CD14-positive monocyte (primary cell): ENCODE measurements at regions of chr19 and their contacts with region 1.

Region 1: GRCh38 chr19:47391510-47392223 is 27.7 kb downstream of the MEIS3 start:
- DNase-seq: peak; percentile 79 to 90 (median 85)
- H3K4me3 ChIP-seq: no peak overlapping the region
- H3K4me3 Mint-ChIP-seq: peak overlapping the region; percentile 2 to 31
- H3K27ac ChIP-seq: peak overlapping the region in 1 of 2 donors; percentile 100
- H3K27ac Mint-ChIP-seq: peak overlapping the region; percentile 100
- H3K4me1 ChIP-seq: peaks cover 43 to 46% of the 10 kb centered on the region in 2 donors
- H3K4me1 Mint-ChIP-seq: peaks cover 44% of the 10 kb centered on the region
- H3K27me3 ChIP-seq: peaks cover 0 to 3% of the 10 kb centered on the region in 2 donors
- H3K27me3 Mint-ChIP-seq: peaks cover 16 to 24% (median 19%) of the 10 kb centered on the region in 3 donors
- CTCF ChIP-seq: peak; percentile 91

Region 2: GRCh38 chr19:47284324-47284899 is 107.3 kb before region 1 on chr19:
- intact Hi-C with region 1: loop called in 1 of 2 experiments (anchors 1 kb)
- DNase-seq: peak; percentile 47 to 59 (median 52)
- H3K4me3 ChIP-seq: no peak overlapping the region
- H3K4me3 Mint-ChIP-seq: no peak overlapping the region
- H3K27ac ChIP-seq: no peak overlapping the region
- H3K27ac Mint-ChIP-seq: peak overlapping the region in 1 of 7 donors; percentile 70
- H3K4me1 ChIP-seq: no peaks in the 10 kb centered on the region
- H3K4me1 Mint-ChIP-seq: peaks cover 7% of the 10 kb centered on the region
- H3K27me3 ChIP-seq: no peaks in the 10 kb centered on the region
- H3K27me3 Mint-ChIP-seq: peaks cover 0 to 3% (median 2%) of the 10 kb centered on the region in 3 donors
- CTCF ChIP-seq: peak; percentile 68

Region 3: DNA sequence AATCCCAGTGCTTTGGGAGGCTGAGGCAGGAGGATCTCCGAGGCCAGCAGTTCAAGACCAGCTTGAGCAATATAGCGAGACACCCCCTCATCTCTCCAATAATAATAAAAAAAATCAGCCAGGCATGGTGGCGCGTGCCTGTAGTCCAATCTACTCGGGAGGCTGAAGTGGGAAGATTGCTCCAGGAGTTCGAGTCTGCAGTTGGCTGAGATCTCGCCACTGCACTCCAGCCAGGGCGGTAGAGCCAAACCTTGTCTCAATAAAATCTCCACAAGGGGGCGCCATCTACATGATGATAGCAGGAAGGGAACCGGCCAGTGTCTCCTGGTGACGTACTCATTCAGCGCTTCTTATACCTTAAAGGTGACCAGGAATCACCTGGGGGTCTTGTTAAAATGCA is 95.6 kb before region 1 on chr19:
- intact Hi-C with region 1: loop called (anchors 1 kb)
- DNase-seq: peak; percentile 77 to 88 (median 84)
- H3K4me3 ChIP-seq: no peak overlapping the region
- H3K4me3 Mint-ChIP-seq: peak overlapping the region in 1 of 2 donors; percentile 37
- H3K27ac ChIP-seq: no peak overlapping the region
- H3K27ac Mint-ChIP-seq: peak overlapping the region in 2 of 7 donors; percentile 57 to 84
- H3K4me1 ChIP-seq: peaks cover 12 to 15% of the 10 kb centered on the region in 2 donors
- H3K4me1 Mint-ChIP-seq: peaks cover 19% of the 10 kb centered on the region
- H3K27me3 ChIP-seq: no peaks in the 10 kb centered on the region
- H3K27me3 Mint-ChIP-seq: peaks cover 6 to 19% (median 8%) of the 10 kb centered on the region in 3 donors
- CTCF ChIP-seq: peak; percentile 81

Region 4: DNA sequence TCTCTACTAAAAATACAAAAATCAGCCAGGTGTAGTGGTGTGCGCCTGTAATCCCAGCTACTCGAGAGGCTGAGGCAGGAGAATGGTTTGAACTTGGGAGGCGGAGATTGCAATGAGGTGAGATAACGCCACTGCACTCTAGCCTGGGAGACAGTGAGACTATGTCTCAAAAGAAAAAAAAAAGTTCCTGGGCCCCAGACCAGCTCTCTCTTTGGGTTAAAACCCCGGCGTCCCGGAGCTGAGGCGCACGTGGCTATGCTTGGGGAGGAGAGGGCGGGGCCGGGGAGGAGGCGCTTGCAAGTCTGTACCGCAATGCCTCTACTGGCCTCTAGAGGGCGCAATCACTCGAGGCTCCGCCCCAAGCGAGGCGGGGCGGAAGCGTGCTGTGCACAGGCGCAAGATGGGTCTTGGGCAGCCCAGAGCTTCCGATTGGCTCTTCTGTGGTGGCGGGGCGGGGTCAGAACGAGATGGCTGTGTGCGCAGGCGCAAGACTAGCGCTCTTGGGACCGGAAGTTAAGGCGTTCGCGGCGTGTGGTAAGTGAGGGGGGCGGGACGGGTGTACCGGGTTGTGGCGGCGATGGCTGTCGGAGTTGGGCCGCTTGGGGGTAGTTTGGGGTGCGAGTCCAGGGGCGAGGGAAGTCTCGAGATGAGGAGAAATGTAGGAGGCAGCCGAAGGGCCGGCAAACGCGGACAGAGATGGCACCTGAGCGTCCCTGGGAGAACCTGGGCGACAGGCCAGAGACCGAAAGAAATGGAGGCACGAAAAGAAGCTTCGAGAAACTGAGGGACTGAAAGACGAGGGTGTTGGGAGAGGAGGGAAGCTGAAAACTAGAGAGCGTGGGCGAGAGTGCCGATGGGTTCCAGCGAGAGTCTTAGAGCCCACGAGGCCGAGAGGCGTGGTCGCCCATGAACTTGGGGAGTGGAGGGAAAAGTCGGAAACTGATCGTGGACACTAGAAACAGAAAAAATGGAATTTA is 42.6 kb before region 1 on chr19 and contains the start of gene DHX34:
- intact Hi-C with region 1: loop called (anchors 2 to 5 kb)
- DNase-seq: peak; percentile 99
- H3K4me3 ChIP-seq: peak within 1 kb of the TSS; percentile 61 to 97 (median 85)
- H3K4me3 Mint-ChIP-seq: peak within 1 kb of the TSS; percentile 97
- H3K27ac ChIP-seq: peak within 1 kb of the TSS; percentile 83 to 98
- H3K27ac Mint-ChIP-seq: peak within 1 kb of the TSS; percentile 96 to 100 (median 99)
- H3K4me1 ChIP-seq: peaks cover 40 to 54% of the 10 kb centered on the region in 2 donors
- H3K4me1 Mint-ChIP-seq: peaks cover 47% of the 10 kb centered on the region
- H3K27me3 ChIP-seq: no peaks in the 10 kb centered on the region
- H3K27me3 Mint-ChIP-seq: peaks cover 0 to 3% (median 0%) of the 10 kb centered on the region in 3 donors
- CTCF ChIP-seq: peak; percentile 91
- polyA plus RNA-seq, gene DHX34: 3.4 to 34.4 (median 3.8) TPM

Region 5: DNA sequence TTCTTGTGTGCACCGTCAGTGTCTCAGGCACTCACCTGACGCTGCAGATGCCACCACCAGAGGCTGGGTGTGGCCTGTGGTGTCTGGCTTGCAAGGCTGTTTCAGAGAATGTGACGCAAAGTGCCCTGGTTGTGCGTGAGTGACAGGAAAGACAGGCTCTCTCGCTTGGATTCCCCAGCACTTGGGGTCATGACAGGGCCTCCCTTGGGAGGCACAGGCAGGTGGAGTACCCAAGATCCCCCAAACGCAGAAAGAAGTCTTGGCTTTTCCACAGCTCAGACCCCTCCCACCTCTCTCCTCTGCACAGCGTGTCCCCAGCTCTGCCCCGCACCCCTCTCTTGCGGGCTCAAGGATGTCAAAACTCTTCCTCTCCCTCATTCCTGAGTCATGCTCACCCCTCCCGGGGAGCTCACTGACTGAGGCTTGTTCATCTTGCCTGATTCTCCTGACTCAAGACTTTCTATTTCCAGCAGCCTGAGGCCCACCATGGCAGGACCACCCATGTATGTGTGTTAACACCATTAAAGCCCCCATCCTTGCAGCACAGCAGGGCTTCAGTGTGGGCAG is 21.5 kb before region 1 on chr19:
- intact Hi-C with region 1: loop called in 1 of 2 experiments (anchors 2 kb)
- DNase-seq: peak; percentile 90 to 96 (median 90)
- H3K4me3 ChIP-seq: peak overlapping the region in 1 of 3 experiments; percentile 41
- H3K4me3 Mint-ChIP-seq: peak overlapping the region; percentile 70 to 87
- H3K27ac ChIP-seq: peak overlapping the region; percentile 86 to 94
- H3K27ac Mint-ChIP-seq: peak overlapping the region; percentile 98 to 100 (median 100)
- H3K4me1 ChIP-seq: peaks cover 30 to 35% of the 10 kb centered on the region in 2 donors
- H3K4me1 Mint-ChIP-seq: peaks cover 38% of the 10 kb centered on the region
- H3K27me3 ChIP-seq: no peaks in the 10 kb centered on the region
- H3K27me3 Mint-ChIP-seq: no peaks in the 10 kb centered on the region
- CTCF ChIP-seq: no peak

Region 6: GRCh38 chr19:47428177-47428894 is 36.7 kb after region 1 on chr19:
- intact Hi-C with region 1: loop called in 1 of 2 experiments (anchors 5 kb)
- DNase-seq: peak; percentile 74 to 95 (median 78)
- H3K4me3 ChIP-seq: peak overlapping the region in 1 of 3 experiments; percentile 9
- H3K4me3 Mint-ChIP-seq: no peak overlapping the region
- H3K27ac ChIP-seq: no peak overlapping the region
- H3K27ac Mint-ChIP-seq: no peak overlapping the region
- H3K4me1 ChIP-seq: peaks cover 13 to 21% of the 10 kb centered on the region in 2 donors
- H3K4me1 Mint-ChIP-seq: peaks cover 7% of the 10 kb centered on the region
- H3K27me3 ChIP-seq: peaks cover 26 to 86% of the 10 kb centered on the region in 2 donors
- H3K27me3 Mint-ChIP-seq: peaks cover 29 to 60% (median 58%) of the 10 kb centered on the region in 3 donors
- CTCF ChIP-seq: no peak

Region 7: DNA sequence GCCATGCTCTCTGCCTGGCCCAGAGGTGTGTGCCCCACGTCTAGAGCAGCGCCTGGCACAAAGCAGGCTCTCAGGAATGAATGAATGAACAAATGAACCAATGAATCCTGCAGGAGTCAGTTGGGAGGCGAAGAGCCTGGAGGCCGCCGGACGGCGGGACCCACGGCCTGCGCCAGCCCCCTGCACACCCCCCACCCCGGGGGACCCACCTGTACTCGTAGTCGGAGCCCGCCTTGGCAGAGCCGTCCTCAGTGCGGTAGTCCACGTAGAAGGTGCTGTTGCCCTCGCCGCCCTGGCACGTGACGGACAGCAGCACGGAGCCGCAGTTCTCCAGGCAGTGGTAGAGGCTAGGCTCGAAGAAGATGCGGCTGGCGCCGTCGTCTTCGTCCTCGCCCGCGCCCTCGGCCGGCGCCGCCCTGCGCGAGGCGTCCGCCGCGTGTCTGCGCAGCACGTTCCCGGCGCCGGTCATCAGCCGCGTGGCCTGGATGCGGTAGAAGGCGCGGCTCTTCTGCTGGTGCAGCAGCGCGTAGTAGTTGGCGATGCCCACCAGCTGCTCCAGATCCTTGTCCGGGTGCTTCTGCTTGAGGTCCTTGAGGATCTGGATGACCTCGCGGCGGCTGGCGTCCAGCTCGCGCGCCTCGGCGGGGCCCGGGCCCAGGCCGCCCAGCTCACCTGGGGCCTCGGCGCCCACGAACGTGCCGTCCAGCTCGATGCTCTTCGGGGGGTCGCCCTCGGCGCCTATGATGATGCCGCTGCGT is 65.2 kb after region 1 on chr19:
- intact Hi-C with region 1: no loop called
- DNase-seq: no peak
- H3K4me3 ChIP-seq: no peak overlapping the region
- H3K4me3 Mint-ChIP-seq: peak overlapping the region in 1 of 2 donors; percentile 68
- H3K27ac ChIP-seq: no peak overlapping the region
- H3K27ac Mint-ChIP-seq: no peak overlapping the region
- H3K4me1 ChIP-seq: no peaks in the 10 kb centered on the region
- H3K4me1 Mint-ChIP-seq: peaks cover 2% of the 10 kb centered on the region
- H3K27me3 ChIP-seq: peaks cover 28 to 51% of the 10 kb centered on the region in 2 donors
- H3K27me3 Mint-ChIP-seq: peaks cover 18 to 48% (median 44%) of the 10 kb centered on the region in 3 donors
- CTCF ChIP-seq: no peak